ENCODE measurements at regions of chr6 and their contacts with region 1.

Region 1: DNA sequence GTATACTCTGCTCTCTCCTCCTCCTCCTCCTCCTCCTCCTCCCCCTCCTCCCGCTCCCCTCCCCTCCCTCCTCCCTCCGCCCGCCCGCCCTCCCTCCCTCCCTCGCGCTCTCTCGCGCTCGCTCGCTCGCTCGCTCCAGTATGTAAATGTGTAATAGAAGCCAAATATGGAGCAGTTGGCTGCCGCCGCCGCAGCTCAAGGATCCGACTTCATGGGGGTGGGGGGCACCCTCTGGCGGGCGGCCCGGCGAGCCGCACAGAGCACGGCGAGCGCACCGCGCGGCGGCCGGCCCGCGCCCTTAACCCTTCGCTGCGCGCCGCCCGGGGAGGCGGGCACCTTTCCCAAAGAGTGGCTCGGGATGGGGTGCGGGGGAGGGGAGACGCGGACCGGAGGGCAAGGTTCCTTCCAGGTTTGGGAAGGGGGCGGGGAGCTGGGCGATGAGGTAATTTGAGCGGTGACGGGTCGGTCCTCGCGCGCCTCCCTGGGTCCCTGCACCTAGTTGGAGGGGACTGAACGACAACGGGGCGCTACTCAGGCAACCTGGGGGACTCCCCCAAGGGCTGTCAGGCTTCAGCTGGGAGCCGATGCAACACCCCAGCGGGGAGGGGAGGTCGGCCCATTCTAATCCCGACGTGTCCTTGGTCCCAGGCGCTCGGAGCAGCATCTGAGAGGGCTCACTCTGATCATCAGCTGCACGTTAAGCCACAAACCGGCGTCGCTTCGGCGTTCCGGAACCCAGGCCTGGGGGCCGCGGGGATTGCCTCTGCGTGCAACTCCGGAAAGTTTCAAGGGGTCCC is 409 bp upstream of the ATXN1 start:
- DNase-seq: peak; percentile 84 to 90
- ATAC-seq: peak; percentile 49 to 70 (median 60)
- H3K4me3 ChIP-seq: peak overlapping the region; percentile 67 to 90 (median 86)
- H3K27ac ChIP-seq: peak overlapping the region; percentile 92 to 99 (median 98)
- H3K4me1 ChIP-seq: peaks cover 0 to 57% (median 39%) of the 10 kb centered on the region in 9 donors
- H3K27me3 ChIP-seq: no peaks in the 10 kb centered on the region
- CTCF ChIP-seq: peak in 7 of 9 donors; percentile 8 to 55 (median 30)

Region 2: DNA sequence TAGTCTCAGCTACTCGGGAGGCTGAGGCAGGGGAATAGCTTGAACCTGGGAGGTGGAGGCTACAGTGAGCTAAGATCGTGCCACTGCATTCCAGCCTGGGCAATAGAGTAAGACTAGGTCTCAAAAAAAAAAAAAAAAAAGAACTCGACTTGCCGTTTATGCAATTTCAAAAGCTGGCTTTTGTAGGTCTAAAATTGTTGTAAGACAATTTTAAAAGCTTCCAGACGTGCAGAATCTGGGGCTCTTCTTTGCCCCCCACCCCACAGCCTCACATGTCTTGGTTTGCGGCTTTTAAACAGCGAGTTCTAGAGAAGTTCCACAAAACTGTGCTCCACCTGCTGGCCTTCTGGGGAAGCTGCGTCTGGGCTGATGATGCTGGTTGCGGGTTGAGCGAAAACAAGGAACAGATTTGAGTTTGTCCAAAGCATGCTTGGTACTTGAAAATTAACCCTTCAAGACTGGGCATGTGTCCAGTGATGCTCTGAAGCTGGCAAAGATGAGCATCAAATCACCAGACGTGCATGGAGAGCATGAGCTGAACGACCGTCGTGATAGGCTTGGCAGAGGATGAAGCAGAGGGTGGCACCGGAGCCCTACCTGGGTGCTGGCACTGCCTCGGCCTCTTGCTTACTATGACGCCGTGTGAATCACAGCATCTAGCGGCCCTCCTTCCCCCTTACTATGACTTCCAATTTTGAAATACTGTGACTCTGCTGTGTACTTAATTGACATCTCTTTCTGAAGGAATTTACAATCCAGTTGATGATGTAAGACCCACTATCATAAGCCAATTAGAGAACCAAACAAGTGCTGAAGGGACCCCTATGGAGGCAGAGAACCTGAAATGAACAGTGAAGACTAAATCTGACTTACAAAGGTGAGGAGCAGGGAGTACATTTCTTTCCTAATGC is 351.9 kb before region 1 on chr6:
- intact Hi-C with region 1: loop called in 6 of 10 experiments (anchors 5 to 10 kb)
- DNase-seq: peak; percentile 50 to 71
- ATAC-seq: peak; percentile 35 to 84 (median 68)
- H3K4me3 ChIP-seq: no peak overlapping the region
- H3K27ac ChIP-seq: no peak overlapping the region
- H3K4me1 ChIP-seq: peaks cover 0 to 64% (median 19%) of the 10 kb centered on the region in 9 donors
- H3K27me3 ChIP-seq: no peaks in the 10 kb centered on the region
- CTCF ChIP-seq: peak; percentile 55 to 90 (median 83)

Region 3: GRCh38 chr6:16519265-16520242 is 242.1 kb before region 1 on chr6:
- intact Hi-C with region 1: loop called in 7 of 10 experiments (anchors 5 to 10 kb)
- DNase-seq: no peak
- ATAC-seq: peak in 6 of 8 donors; percentile 33 to 73 (median 61)
- H3K4me3 ChIP-seq: no peak overlapping the region
- H3K27ac ChIP-seq: no peak overlapping the region
- H3K4me1 ChIP-seq: peaks cover 0 to 36% (median 22%) of the 10 kb centered on the region in 9 donors
- H3K27me3 ChIP-seq: no peaks in the 10 kb centered on the region
- CTCF ChIP-seq: no peak

Region 4: DNA sequence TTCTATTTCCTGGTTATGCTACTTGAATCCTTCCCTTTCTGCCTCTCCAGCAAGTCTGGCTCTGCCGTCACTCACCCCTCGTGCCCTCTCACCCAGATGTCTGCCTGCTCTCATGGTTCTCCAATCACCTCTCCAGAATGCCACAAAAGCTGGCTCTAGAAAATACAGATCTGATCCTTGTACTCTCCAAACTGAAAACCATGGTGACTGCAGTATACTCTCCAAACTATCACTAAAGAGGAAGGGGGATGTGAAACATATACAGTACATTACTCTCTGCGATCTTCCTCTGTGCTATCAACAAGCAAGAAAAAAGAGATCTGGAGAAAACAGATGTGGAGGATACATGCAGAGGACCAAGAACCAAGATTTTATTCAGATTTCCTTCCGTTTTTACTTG is 91.5 kb before region 1 on chr6:
- intact Hi-C with region 1: loop called in 2 of 10 experiments (anchors 5 kb)
- DNase-seq: peak; percentile 48 to 58
- ATAC-seq: peak; percentile 69 to 95 (median 80)
- H3K4me3 ChIP-seq: no peak overlapping the region
- H3K27ac ChIP-seq: peak overlapping the region in 8 of 10 donors; percentile 5 to 79 (median 27)
- H3K4me1 ChIP-seq: peaks cover 4 to 76% (median 48%) of the 10 kb centered on the region in 9 donors
- H3K27me3 ChIP-seq: no peaks in the 10 kb centered on the region
- CTCF ChIP-seq: no peak

Region 5: GRCh38 chr6:16741112-16742016 is 20.3 kb before region 1 on chr6:
- intact Hi-C with region 1: no loop called
- DNase-seq: no peak
- ATAC-seq: peak in 4 of 8 donors; percentile 42 to 52 (median 48)
- H3K4me3 ChIP-seq: no peak overlapping the region
- H3K27ac ChIP-seq: peak overlapping the region in 9 of 10 donors; percentile 6 to 66 (median 31)
- H3K4me1 ChIP-seq: peaks cover 9 to 85% (median 74%) of the 10 kb centered on the region in 9 donors
- H3K27me3 ChIP-seq: no peaks in the 10 kb centered on the region
- CTCF ChIP-seq: no peak

Region 6: GRCh38 chr6:16964553-16965501 is 203.2 kb after region 1 on chr6:
- intact Hi-C with region 1: loop called in 4 of 10 experiments (anchors 2 to 5 kb)
- DNase-seq: peak; percentile 62 to 70
- ATAC-seq: peak; percentile 59 to 95 (median 92)
- H3K4me3 ChIP-seq: no peak overlapping the region
- H3K27ac ChIP-seq: no peak overlapping the region
- H3K4me1 ChIP-seq: peaks cover 0 to 7% (median 5%) of the 10 kb centered on the region in 9 donors
- H3K27me3 ChIP-seq: peaks cover 0 to 5% (median 0%) of the 10 kb centered on the region in 7 donors
- CTCF ChIP-seq: peak; percentile 75 to 94 (median 87)